ENCODE measurements at regions of chr20 and their contacts with region 1.

Region 1: DNA sequence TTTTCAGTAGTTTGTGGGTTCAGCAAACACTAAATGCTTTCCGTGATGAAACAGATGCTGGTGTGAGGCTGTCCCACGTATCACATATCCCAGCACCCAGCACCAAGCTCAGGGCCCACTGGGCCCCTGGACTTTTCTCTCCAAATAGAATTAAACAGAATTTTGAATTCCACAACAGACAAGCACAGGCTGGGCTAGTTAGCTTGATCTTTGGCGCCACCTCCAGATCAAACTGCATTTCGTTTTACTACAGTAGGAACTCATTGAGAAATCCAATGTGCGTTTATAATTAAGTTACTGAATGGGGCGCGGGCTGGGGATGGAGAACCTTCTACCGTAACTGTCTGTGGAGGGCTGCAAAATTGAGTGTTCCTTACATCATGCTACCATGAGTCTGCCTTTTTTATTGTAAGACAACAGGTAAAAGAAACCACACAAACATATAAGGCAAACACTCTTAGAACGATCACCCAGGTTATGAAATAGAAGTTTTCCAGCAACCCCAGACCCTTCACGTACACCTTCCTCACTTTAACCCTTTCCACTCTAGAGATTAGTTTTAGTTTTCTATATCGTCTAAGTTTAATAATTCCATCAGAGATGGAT is 107.8 kb downstream of the ZFP64 start:
- DNase-seq: peak; percentile 92
- ATAC-seq: peak; percentile 90
- H3K4me3 ChIP-seq: no peak overlapping the region
- H3K27ac ChIP-seq: no peak overlapping the region
- H3K4me1 ChIP-seq: peaks cover 16% of the 10 kb centered on the region
- H3K27me3 ChIP-seq: no peaks in the 10 kb centered on the region
- CTCF ChIP-seq: peak; percentile 99

Region 2: GRCh38 chr20:51372176-51372803 is 711.4 kb before region 1 on chr20:
- CTCF ChIA-PET with region 1: no interaction called
- POLR2A ChIA-PET with region 1: no interaction called
- intact Hi-C with region 1: loop called (anchors 1 kb)
- DNase-seq: peak; percentile 96
- ATAC-seq: peak; percentile 100
- H3K4me3 ChIP-seq: no peak overlapping the region
- H3K27ac ChIP-seq: no peak overlapping the region
- H3K4me1 ChIP-seq: peaks cover 14% of the 10 kb centered on the region; the same call in 1 of the 2 replicates
- H3K27me3 ChIP-seq: no peaks in the 10 kb centered on the region
- CTCF ChIP-seq: peak; percentile 99

Region 3: DNA sequence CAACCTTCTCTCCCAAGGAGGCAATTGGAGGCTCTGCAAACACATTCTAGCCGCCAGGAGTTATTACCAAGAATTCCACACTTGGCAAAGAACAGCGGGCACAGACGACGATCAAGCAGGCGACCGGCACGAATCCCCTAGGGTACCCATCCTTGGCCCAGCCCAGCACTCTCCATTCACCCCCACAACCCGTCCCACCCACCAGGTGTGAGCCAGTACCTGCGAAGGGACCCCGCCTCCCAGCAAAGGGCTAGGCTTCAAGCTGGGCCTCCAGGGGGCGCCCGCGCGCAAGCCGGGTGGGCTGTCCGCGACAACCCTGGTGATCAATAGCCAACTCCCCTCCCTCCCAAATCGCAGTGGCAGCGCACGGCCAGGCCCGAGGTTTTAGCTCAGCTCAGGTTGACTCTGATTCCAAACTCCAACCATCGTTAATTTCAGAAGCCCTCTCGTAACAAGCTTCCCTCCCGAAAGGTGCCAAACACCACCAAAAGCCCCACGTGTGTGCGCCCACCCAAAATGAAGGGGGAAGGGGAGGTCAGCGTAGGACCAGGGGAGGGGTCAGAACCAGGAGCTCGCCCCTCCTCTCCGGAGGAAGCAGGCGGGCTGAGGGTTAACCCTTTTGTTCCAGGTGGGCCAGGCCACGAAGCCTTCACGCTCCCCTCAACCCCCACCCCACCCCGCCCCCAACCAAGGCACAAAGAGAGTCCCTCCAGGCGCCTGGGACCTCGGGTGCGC is 283.5 kb before region 1 on chr20:
- CTCF ChIA-PET with region 1: interaction called, 3 read pairs
- POLR2A ChIA-PET with region 1: no interaction called
- intact Hi-C with region 1: loop called (anchors 1 kb)
- DNase-seq: peak; percentile 92
- ATAC-seq: peak; percentile 89
- H3K4me3 ChIP-seq: peak overlapping the region; percentile 73
- H3K27ac ChIP-seq: no peak overlapping the region
- H3K4me1 ChIP-seq: peaks cover 33% of the 10 kb centered on the region
- H3K27me3 ChIP-seq: no peaks in the 10 kb centered on the region
- CTCF ChIP-seq: peak; percentile 100

Region 4: DNA sequence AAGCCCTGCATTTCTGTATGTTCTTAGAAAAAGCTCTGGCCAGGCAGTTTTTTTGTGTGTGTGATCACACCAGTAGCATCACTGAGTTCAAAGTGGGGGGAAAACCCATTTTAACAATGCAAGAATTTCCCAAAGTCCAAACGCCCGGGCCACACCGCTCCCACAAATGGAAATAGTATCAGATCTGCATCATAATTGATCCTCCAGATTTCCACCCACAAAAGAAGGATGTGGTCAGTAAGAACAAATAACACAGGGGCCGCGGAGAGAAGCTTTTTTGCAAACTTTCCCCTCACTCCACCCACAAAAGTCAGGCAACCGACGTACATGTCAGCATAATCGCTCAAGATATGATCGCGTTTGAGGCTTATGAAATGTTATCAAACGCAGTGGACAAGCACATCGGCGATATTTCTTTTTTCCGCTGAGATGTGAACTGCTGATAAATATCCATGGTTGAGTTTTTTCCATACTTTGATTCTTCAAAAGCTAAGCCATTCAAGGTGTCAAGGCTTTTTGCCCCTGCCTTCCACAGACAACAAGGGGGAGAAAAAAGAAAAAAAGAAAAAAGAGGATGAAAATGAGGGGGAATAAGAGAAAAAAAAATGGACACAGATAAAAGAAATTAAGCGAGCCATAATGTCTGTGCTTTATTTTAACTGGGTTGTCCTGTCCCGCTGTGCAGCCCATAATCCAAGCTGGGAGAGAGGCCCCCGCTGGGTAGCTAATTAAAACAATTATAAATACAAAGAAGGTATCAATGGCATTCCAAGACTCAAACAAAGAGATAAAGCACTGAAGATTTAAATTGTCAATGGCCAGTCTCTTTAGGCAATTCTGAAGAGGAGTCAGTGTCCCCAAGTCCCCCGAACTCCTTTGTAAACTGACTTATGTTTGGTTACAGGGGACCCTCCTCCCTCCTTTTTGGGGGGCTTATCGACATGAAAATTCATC is 35.6 kb before region 1 on chr20:
- CTCF ChIA-PET with region 1: no interaction called
- POLR2A ChIA-PET with region 1: no interaction called
- intact Hi-C with region 1: loop called (anchors 1 kb)
- DNase-seq: no peak
- ATAC-seq: no peak
- H3K4me3 ChIP-seq: no peak overlapping the region
- H3K27ac ChIP-seq: no peak overlapping the region
- H3K4me1 ChIP-seq: no peaks in the 10 kb centered on the region
- H3K27me3 ChIP-seq: no peaks in the 10 kb centered on the region
- CTCF ChIP-seq: no peak

Region 5: GRCh38 chr20:52145587-52145986 is 61.9 kb after region 1 on chr20:
- CTCF ChIA-PET with region 1: no interaction called
- POLR2A ChIA-PET with region 1: no interaction called
- intact Hi-C with region 1: no loop called
- DNase-seq: peak; percentile 47
- ATAC-seq: peak; percentile 50
- H3K4me3 ChIP-seq: no peak overlapping the region
- H3K27ac ChIP-seq: no peak overlapping the region
- H3K4me1 ChIP-seq: no peaks in the 10 kb centered on the region
- H3K27me3 ChIP-seq: no peaks in the 10 kb centered on the region
- CTCF ChIP-seq: no peak